ENCODE measurements at regions of chr17 and their contacts with region 1.

Region 1: GRCh38 chr17:75109407-75110233 is at the start of gene ARMC7:
- DNase-seq: peak; percentile 93
- H3K4me3 Mint-ChIP-seq: peak within 1 kb of the TSS; percentile 90
- H3K27ac Mint-ChIP-seq: peak within 1 kb of the TSS; percentile 91
- H3K4me1 Mint-ChIP-seq: peaks cover 29% of the 10 kb centered on the region
- H3K27me3 Mint-ChIP-seq: no peaks in the 10 kb centered on the region
- total RNA-seq, gene ARMC7: 3.8 to 4.9 TPM

Region 2: GRCh38 chr17:74961657-74962490 is 147.7 kb before region 1 on chr17:
- CTCF ChIA-PET with region 1: interaction called, 31 read pairs
- intact Hi-C with region 1: loop called (anchors 2 kb)
- DNase-seq: peak; percentile 91
- H3K4me3 Mint-ChIP-seq: no peak overlapping the region
- H3K27ac Mint-ChIP-seq: no peak overlapping the region
- H3K4me1 Mint-ChIP-seq: peaks cover 7% of the 10 kb centered on the region
- H3K27me3 Mint-ChIP-seq: no peaks in the 10 kb centered on the region

Region 3: DNA sequence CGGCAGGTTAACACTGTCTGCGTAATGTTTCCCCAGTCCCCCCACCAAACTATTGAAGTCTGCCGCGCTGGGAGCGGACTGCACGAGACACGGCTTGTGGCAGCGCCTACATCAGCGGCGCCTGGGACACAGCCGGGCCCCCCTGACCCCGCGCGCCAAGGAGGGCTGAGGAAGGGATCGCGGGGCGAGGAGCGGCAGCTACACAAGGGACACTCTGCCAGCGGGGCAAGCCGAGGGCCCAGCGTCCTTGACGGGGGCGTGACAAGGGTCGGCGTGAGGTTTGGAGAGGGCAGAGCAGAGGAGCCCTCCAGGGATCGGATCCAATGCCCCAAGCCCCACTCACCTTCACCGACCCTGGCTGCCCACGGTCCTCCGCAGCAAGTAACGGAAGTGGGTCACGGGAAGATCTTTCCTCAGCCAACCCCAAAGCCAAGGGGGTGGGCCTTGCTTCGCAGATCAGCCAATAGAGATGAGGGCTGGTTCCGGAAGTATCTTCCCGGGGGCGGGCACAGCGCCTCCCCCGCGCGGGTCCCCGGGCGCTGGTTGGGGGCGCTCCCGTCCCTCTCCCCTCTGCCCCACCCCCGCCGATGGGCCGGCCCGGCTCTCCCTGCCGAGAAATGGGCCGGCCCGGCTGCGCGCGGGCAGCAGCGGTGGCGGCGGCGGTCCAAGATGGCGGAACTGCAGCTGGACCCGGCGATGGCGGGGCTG is 62.9 kb before region 1 on chr17 and contains the starts of genes ATP5PD and KCTD2:
- CTCF ChIA-PET with region 1: interaction called, 12 read pairs
- intact Hi-C with region 1: loop called (anchors 5 kb)
- DNase-seq: peak; percentile 97
- H3K4me3 Mint-ChIP-seq: peak within 1 kb of the TSS; percentile 97
- H3K27ac Mint-ChIP-seq: peak within 1 kb of the TSS; percentile 89
- H3K4me1 Mint-ChIP-seq: peaks cover 47% of the 10 kb centered on the region
- H3K27me3 Mint-ChIP-seq: no peaks in the 10 kb centered on the region
- total RNA-seq, gene ATP5PD: 227 to 249 TPM
- total RNA-seq, gene KCTD2: 18.7 to 20.8 TPM

Region 4: GRCh38 chr17:75124041-75124818 is 14.6 kb after region 1 on chr17:
- CTCF ChIA-PET with region 1: interaction called, 195 read pairs
- intact Hi-C with region 1: loop called (anchors 1 kb)
- DNase-seq: peak; percentile 85
- H3K4me3 Mint-ChIP-seq: peak overlapping the region; percentile 32
- H3K27ac Mint-ChIP-seq: peak overlapping the region; percentile 84
- H3K4me1 Mint-ChIP-seq: peaks cover 24% of the 10 kb centered on the region
- H3K27me3 Mint-ChIP-seq: no peaks in the 10 kb centered on the region

Region 5: DNA sequence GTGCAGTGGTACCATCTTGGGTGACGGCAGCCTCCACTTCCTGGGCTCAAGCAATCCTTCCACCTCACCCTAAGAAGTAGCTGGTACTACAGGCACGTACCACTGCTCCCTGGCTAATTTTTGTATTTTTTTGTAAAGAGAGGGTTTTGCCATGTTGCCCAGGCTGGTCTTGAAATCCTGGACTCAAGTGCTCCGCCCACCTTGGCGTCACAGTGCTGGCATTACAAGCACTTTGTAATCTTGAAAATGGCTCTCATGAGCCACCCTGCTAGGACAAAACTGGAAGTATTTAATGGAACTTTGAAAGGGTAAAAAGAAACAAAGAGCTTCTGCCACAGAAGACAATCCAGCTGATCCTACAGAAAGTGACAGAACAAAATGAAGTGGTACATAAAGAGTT is 63.9 kb after region 1 on chr17:
- CTCF ChIA-PET with region 1: interaction called, 94 read pairs
- intact Hi-C with region 1: loop called (anchors 1 kb)
- DNase-seq: no peak
- H3K4me3 Mint-ChIP-seq: no peak overlapping the region
- H3K27ac Mint-ChIP-seq: peak overlapping the region; percentile 2
- H3K4me1 Mint-ChIP-seq: peaks cover 28% of the 10 kb centered on the region
- H3K27me3 Mint-ChIP-seq: no peaks in the 10 kb centered on the region

Region 6: GRCh38 chr17:75261336-75262111 is 151.9 kb after region 1 on chr17 and contains the starts of genes GGA3 and MRPS7:
- CTCF ChIA-PET with region 1: interaction called, 5 read pairs
- intact Hi-C with region 1: loop called (anchors 5 kb)
- DNase-seq: peak; percentile 98
- H3K4me3 Mint-ChIP-seq: peak within 1 kb of the TSS; percentile 93
- H3K27ac Mint-ChIP-seq: peak within 1 kb of the TSS; percentile 99
- H3K4me1 Mint-ChIP-seq: peaks cover 53% of the 10 kb centered on the region
- H3K27me3 Mint-ChIP-seq: no peaks in the 10 kb centered on the region
- total RNA-seq, gene GGA3: 65.7 to 66.1 TPM
- total RNA-seq, gene MRPS7: 73.3 to 78.3 TPM

Measured in activated naive CD4-positive, alpha-beta T cell treated with anti-CD3 and anti-CD28 coated beads for 36 hours (primary cell).